BJ (cell line): ENCODE measurements at regions of chr20 and their contacts with region 1.

Region 1: DNA sequence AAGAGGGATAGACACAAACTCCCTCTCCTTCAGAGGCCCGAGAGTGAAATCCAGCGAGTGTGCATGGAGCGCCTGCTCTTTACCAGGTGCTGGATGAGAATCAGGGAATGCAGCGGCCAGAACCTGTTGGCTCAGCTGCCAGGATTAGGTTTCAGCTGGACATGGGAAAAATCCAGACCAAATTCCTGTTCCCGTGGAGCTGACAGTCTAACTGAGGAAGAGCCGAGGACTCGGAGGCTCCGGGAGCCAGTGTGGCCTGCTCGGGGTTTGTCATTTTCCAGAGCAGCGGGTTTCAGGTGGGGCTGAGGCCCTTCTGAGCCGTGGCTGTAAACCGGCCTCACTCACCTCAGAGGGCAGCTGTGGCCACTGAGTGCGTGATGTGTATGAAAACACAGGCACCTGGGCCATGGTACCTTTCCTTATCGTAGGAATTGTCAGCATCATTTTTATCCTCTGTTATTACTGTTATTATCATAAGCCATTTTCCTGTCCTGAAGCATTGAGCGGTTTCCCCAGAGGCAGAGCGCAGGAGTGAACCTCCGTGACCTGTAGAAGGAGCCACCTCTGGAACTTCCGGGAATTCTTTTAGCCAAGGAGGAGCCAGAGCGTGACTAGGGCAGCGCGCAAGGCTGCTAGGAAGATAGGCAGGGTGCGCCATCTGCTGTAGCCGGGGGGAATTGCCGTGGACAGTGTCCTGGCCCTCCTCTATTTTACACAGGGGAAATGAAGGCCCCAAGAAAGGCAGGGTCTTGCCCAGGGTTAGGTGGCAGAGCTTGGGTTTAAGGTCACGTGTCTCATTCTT is 27.3 kb downstream of the PKIG start:
- DNase-seq: peak; percentile 26
- H3K4me3 ChIP-seq: no peak overlapping the region
- H3K27me3 ChIP-seq: no peaks in the 10 kb centered on the region
- CTCF ChIP-seq: peak; percentile 99

Region 2: GRCh38 chr20:44388466-44389023 is 221.2 kb before region 1 on chr20:
- CTCF ChIA-PET with region 1: interaction called, 21 read pairs
- POLR2A ChIA-PET with region 1: no interaction called
- DNase-seq: no peak
- H3K4me3 ChIP-seq: no peak overlapping the region
- H3K27me3 ChIP-seq: peaks cover 5% of the 10 kb centered on the region
- CTCF ChIP-seq: peak; percentile 87

Region 3: DNA sequence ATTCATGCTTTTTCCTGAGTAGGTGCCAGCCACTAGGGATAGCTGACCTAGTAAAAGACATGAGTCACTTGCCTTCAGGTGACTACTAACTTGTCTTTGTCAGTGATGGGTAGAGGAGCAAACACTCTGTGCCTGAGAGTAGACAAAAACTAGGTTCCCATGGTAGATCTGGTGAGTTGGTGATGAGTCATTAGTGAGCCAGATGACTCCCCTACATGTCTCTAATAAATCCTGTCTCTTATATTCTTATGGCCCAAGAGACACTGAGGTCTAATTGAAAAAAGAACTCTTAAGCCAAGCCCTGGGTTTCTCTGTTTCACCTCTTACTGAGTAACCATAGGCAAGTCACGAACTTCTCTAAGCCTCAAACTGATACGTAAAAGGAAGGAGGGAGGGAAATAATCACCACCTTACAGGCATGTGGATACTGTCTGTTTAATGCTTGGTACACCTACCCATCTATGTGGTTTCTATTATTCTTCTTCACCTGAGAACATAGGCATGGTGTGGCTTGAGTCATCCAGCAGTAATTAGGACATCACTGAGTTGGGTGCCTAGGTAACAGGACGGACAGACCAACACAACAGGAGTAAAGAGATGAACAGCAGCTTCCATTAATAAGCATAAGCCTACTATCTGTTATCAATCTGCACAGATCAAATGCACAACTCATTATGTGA is 113.8 kb before region 1 on chr20:
- CTCF ChIA-PET with region 1: interaction called, 13 read pairs
- POLR2A ChIA-PET with region 1: no interaction called
- DNase-seq: peak; percentile 99
- H3K4me3 ChIP-seq: no peak overlapping the region
- H3K27me3 ChIP-seq: no peaks in the 10 kb centered on the region
- CTCF ChIP-seq: no peak

Region 4: DNA sequence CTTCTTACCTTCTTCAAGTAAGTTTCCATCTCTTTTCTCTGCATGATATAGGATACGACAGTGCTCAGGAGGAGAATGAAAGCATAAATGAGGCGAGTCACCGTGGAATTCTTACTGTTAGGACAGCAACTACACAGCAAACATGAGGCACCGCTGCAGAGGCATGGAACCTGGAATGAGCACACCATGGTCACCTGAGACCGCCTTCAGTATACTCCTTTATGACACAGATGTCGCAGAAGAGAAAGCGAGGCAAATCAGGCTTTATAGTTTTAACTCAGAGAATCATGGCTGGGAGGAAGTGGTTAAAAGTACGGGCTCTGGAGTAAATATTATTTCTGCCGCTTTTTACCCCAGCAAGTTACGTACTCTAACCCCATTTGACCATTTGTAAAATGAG is 95.8 kb before region 1 on chr20:
- CTCF ChIA-PET with region 1: interaction called, 14 read pairs
- POLR2A ChIA-PET with region 1: no interaction called
- DNase-seq: no peak
- H3K4me3 ChIP-seq: no peak overlapping the region
- H3K27me3 ChIP-seq: no peaks in the 10 kb centered on the region
- CTCF ChIP-seq: no peak

Region 5: DNA sequence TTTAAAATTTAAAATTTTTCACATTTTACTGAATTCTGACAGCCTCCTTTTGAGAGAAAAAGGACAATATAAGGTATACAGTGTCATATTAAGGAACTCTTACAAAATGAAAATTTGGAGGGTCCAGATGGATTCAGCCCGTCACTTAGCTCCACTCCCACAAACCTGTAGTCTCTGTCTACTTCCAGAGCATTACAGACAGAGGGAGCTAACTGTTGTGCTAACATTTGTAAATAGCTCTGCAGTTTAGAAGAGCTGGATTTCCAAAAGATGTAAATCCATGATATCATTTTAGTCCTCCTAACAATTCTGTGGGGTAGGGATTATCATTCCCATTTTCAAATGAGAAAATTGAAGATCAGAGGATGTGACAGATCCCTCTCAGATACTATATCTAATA is 71.7 kb before region 1 on chr20:
- CTCF ChIA-PET with region 1: interaction called, 14 read pairs
- POLR2A ChIA-PET with region 1: no interaction called
- DNase-seq: no peak
- H3K4me3 ChIP-seq: no peak overlapping the region
- H3K27me3 ChIP-seq: no peaks in the 10 kb centered on the region
- CTCF ChIP-seq: peak; percentile 30; the same call in 1 of the 2 replicates

Region 6: DNA sequence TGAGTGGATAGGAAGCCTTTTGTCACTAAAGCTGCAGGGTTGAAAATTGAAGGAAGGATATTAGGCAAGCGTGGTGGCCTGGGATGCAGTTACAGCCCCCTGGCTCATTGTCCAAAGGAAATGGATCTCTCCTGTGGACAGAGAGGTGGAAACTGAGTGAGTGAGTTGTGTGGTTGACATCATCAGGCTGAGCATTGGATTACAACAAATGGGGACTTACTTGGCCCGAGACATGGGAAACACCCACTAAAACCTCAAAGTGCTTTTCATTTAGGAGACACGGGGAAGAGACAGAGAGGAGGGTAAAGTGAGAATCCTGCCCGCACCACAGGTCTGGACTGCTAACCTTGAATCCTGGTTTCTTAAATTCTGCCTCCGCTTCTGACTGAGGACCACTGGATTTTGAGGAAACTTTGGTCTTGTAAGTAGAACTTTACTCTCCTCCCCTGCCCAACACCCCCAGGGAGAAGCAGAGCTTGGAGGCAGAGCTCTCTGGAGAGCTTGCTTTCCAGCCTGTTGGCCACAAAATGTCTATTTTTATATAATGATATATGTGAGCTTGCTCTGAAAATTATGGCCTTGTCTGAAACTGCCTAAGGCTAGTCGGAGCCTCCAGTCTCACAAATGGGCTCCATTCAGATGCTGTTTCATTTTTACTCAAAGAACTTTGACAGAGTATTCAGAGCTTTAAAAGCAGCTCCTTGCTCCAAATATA is 27.2 kb before region 1 on chr20 and contains the start of gene PKIG:
- CTCF ChIA-PET with region 1: interaction called, 19 read pairs
- POLR2A ChIA-PET with region 1: no interaction called
- DNase-seq: peak; percentile 55
- H3K4me3 ChIP-seq: peak within 1 kb of the TSS; percentile 50
- H3K27me3 ChIP-seq: no peaks in the 10 kb centered on the region
- CTCF ChIP-seq: no peak
- polyA plus RNA-seq, gene PKIG: 130 and 186 TPM in 2 replicates